Left ventricle myocardium superior (tissue), 1 donor: ENCODE measurements at regions of chr14 and their contacts with region 1.

Region 1: GRCh38 chr14:34227834-34228649 is 234.0 kb downstream of the SPTSSA start:
- DNase-seq: peak; percentile 68
- ATAC-seq: peak; percentile 94

Region 2: GRCh38 chr14:34113005-34113511 is 115.0 kb before region 1 on chr14:
- intact Hi-C with region 1: loop called (anchors 10 kb)
- DNase-seq: no peak
- ATAC-seq: no peak